GM10248 (cell line): ENCODE measurements at regions of chr1 and their contacts with region 1.

Region 1: GRCh38 chr1:86104606-86105460 is 51.7 kb downstream of the COL24A1 start:
- DNase-seq: no peak
- CTCF ChIP-seq: no peak

Region 2: DNA sequence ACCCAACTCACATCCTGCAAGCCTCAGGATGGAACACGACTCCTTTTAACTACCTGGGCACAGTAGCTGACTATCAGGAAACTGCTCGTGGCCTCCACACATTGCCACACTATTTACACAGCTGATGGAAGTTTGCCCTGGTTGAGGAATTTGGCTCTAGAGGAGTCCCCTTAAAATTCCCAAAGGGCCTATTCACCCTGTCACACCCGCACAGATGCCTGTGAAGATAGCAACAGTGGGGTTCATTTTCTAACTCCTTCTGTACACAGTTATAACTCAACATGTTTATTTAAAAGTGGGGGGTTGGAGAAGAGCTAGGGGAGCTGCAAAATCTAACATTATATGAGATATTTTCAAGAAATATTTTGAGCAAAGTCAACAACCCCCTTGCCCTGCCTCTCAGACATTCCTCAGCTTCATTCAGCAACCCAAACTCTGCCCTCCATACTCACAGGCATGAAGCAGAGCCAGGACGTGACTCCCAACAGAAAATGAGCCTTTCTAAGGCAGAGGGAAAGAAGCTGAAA is 560.1 kb before region 1 on chr1:
- CTCF ChIA-PET with region 1: no interaction called
- POLR2A ChIA-PET with region 1: interaction called, 10 read pairs
- DNase-seq: no peak
- CTCF ChIP-seq: no peak

Region 3: DNA sequence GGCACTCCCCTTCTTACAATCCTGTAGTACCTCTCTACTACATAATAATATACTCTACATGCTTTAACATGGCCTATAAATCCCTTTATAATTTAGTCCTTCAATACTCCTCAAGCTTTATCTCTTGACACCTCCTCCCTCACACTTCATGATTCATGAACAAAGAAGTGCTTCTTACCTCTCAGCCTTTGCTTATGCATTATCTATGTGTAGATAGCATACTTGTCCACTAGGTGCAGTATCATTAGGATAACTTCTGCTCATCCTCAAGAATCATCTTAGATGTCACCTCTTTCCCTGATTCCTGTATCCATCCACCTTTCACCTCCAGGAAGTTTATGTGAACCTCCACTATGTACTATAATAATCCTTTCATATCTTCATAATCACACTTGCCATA is 22.6 kb before region 1 on chr1:
- CTCF ChIA-PET with region 1: no interaction called
- POLR2A ChIA-PET with region 1: no interaction called
- DNase-seq: no peak
- CTCF ChIP-seq: no peak

Region 4: DNA sequence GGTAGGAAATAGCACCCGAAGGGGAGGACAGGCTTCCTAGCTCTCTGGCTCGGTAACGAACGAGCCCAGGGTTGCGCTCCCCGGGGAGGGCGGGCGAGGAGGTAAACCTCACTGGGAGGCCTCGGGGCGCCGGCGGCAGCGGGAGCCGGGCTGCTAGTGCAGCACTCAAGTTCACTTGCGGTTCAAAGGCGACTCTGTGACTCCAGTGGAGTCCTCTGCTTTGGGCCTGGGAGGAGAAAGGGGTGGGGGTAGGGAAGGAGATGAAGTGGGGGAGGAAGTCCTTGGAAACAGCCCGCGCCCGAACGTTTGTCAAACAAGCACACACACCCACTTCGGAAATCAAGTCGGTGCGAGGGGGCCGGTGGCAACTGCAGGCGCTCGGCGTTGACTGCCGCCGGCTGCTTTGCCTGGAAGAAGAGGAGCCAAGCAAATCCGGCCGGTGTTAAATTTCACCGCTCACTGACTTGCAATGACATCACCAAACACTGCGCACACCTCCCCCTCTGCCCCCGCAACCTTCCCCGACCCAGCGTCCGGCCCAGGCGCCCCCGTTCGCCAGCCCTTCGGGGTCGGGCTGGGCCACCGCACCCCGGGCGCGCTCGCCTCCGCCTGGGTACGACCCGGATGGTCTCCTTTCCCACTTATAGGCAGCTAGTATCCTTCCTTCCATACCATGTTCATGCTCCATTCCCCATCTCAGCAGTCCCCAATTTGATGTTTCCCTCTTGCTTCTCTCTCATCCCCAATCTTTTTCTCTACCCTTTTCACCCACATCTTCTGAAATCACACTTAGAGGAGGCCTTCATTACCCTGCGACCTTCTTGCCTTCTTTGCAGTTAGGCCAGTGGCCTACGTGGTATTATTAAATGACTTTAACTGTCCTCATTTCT is 52.0 kb after region 1 on chr1 and contains the start of gene COL24A1:
- CTCF ChIA-PET with region 1: no interaction called
- POLR2A ChIA-PET with region 1: no interaction called
- DNase-seq: peak; percentile 31
- CTCF ChIP-seq: no peak